Dorsolateral prefrontal cortex (tissue), 120 donors: ENCODE measurements at regions of chr11 and their contacts with region 1.

Region 1: DNA sequence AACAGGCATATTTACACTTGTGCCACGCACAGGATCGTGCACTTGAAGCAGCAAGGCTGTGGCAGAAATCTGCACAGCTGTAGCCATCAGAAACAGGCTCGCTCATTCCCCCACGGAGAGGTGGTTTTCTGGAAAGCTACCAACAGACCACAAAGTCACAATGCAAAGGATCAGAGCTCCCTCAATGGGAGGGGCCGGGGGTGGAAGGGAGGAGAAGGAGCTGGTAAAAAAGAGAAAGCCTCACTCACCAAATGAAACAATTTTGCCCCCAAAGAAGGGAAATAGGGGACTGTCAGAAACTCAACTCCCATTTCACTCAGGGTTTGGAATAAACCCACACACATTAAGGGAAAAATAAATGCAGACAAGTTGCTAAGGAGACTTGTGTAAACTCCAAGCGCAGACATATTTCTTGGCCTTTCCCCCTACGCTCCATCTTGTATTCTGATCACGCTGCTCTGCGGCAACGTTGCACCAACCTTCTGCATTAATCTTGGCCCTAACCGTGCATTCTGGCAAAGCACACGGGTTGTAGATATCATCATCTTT is 43.2 kb upstream of the BLID start:
- DNase-seq: peak in 6 of 10 donors; percentile 37 to 60 (median 50)
- H3K4me3 ChIP-seq: peak overlapping the region in 58 of 59 donors; percentile 11 to 71 (median 44)
- H3K27ac ChIP-seq: peak overlapping the region; percentile 80 to 98 (median 94)
- H3K27me3 ChIP-seq: no peaks in the 10 kb centered on the region
- CTCF ChIP-seq: peak in 1 of 56 donors; percentile 9

Region 2: DNA sequence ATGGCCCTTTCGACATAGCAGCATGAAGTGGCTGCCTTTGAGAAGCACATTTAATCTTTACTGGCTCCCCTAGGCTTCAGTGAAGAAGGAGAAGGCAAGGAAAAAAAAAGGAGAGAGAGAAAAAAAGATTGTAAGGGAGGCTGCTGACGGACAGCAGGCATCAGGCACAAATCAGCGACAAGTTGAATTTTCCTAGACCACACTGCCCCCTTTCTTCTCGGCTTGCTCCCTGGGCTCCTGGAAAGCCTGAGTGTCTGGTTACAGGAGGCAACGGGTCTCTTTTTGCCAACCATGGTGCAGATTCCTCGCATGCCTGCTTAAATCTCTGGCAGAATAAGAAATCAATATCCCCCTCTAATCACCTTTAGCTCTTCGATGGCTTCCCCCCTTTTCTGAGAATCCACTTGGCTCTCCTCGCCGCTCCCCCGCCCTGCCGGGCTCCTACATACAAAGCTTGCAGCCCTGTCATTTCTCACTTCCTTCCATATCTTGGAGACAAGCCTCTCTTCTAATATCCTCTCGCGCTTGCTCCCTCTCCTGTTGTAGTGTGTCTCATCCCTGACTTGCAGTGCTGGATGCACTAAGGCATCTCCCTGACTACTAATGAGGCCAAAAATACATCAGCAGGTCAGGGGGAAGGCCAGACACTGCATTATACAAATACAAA is 57.5 kb before region 1 on chr11:
- intact Hi-C with region 1: loop called (anchors 5 kb)
- DNase-seq: peak; percentile 45 to 90 (median 81)
- H3K4me3 ChIP-seq: peak overlapping the region; percentile 58 to 91 (median 76)
- H3K27ac ChIP-seq: peak overlapping the region; percentile 91 to 99 (median 98)
- H3K27me3 ChIP-seq: no peaks in the 10 kb centered on the region
- CTCF ChIP-seq: peak; percentile 70 to 95 (median 85)

Region 3: GRCh38 chr11:122108192-122108799 is 51.0 kb before region 1 on chr11:
- intact Hi-C with region 1: loop called (anchors 5 kb)
- DNase-seq: peak in 1 of 10 donors; percentile 65
- H3K4me3 ChIP-seq: no peak overlapping the region
- H3K27ac ChIP-seq: peak overlapping the region in 11 of 59 donors; percentile 2 to 47 (median 22)
- H3K27me3 ChIP-seq: no peaks in the 10 kb centered on the region
- CTCF ChIP-seq: peak; percentile 44 to 89 (median 76)

Region 4: GRCh38 chr11:122202951-122203456 is 43.8 kb after region 1 on chr11:
- intact Hi-C with region 1: loop called (anchors 2 to 5 kb)
- DNase-seq: peak; percentile 26 to 83 (median 65)
- H3K4me3 ChIP-seq: peak overlapping the region; percentile 29 to 82 (median 61)
- H3K27ac ChIP-seq: peak overlapping the region in 58 of 59 donors; percentile 34 to 99 (median 88)
- H3K27me3 ChIP-seq: no peaks in the 10 kb centered on the region
- CTCF ChIP-seq: peak; percentile 87 to 100 (median 98)

Region 5: DNA sequence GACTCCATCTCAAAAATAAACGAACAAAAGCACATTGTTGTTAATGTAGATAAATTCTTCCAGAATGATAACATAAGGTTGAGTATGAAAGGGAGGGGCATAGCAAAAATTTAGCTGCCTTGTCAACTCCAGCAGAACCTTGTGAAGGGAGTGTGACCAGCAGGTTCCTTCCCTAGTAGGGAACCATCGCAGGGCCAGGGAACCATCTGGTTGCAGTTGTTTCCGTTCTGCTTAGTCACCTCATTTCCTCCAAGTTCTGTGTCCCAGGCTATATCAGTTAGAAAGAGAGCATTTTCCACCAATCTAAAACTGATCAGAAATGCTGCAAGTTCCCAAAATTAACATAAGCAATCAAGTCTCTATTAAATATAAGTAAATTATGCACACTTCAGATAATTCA is 83.5 kb after region 1 on chr11:
- intact Hi-C with region 1: no loop called
- DNase-seq: no peak
- H3K4me3 ChIP-seq: no peak overlapping the region
- H3K27ac ChIP-seq: peak overlapping the region in 1 of 59 donors; percentile 28
- H3K27me3 ChIP-seq: no peaks in the 10 kb centered on the region
- CTCF ChIP-seq: no peak